Calu3 (cell line): ENCODE measurements at regions of chrX and their contacts with region 1.

Region 1: DNA sequence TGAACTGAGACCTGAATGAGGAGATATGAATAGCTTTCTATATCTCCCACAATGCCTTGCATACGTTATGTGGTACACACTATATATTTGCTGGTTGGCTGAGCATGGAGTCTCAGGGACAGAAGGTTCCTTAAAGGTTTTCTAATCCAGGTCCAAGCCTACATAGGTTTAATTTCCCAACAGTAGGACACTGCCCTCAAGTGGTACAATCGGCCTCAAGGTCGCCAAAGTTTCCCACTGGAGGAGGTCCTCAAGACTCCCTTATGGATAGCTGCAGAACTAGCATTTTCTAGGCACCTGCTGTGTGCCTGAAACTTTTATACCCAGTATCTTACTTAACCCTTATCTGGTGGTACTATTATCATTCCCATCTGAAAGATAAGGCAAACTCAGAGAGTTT is 21.0 kb upstream of the EFNB1 start:
- DNase-seq: no peak
- H3K4me3 Mint-ChIP-seq: no peak overlapping the region
- H3K27ac Mint-ChIP-seq: no peak overlapping the region
- H3K4me1 Mint-ChIP-seq: no peaks in the 10 kb centered on the region
- H3K27me3 Mint-ChIP-seq: peaks cover 21% of the 10 kb centered on the region
- CTCF ChIP-seq: peak; percentile 16

Region 2: DNA sequence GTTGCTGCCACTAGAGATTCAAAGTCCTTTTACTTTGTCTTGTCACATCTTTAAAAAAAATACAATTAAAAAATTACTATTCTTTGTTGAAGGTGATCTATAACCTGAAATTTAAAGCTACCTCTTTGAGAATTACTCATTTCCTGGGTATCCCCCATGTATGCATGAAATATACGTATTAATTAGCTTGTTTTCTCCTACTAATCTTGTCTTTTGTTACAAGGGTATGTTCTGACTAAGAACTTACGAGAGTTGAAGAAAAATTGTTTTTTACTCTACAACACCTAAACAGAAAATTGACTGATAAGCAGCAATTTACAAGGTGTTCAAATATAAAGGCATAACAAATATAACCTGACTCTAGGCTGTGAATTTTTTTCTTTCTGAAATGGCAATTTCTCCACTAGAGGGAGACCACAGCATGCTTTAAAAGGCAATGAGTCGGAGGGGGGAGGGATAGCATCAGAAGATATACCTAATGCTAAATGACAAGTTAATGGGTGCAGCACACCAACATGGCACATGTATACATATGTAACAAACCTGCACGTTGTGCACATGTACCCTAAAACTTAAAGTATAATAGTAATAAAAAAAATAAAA is 624.1 kb before region 1 on chrX:
- CTCF ChIA-PET with region 1: no interaction called
- intact Hi-C with region 1: loop called (anchors 5 kb)
- DNase-seq: peak; percentile 20
- H3K4me3 Mint-ChIP-seq: no peak overlapping the region
- H3K27ac Mint-ChIP-seq: no peak overlapping the region
- H3K4me1 Mint-ChIP-seq: peaks cover 25% of the 10 kb centered on the region
- H3K27me3 Mint-ChIP-seq: no peaks in the 10 kb centered on the region
- CTCF ChIP-seq: peak; percentile 55

Region 3: DNA sequence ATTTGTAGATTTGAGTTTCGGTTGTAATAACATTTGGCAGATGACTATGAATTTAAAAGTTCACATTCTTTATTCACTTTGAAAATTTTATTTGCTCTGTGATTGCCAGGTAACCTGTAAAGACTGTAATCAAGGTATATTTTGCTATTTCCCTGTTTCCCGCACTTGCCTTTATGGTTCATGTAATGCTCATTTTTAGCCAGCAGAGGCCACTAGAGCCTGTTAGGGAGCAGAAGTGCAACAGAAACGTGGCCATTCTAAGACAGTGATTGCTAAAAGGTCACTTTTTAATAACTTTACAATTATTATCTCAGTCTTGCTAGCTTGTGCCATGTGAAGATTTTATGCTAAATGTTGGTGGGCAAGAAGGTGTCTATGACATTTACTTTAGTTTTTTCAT is 296.6 kb before region 1 on chrX:
- CTCF ChIA-PET with region 1: no interaction called
- intact Hi-C with region 1: loop called (anchors 5 kb)
- DNase-seq: peak; percentile 48
- H3K4me3 Mint-ChIP-seq: no peak overlapping the region
- H3K27ac Mint-ChIP-seq: no peak overlapping the region
- H3K4me1 Mint-ChIP-seq: peaks cover 17% of the 10 kb centered on the region
- H3K27me3 Mint-ChIP-seq: no peaks in the 10 kb centered on the region
- CTCF ChIP-seq: no peak

Region 4: GRCh38 chrX:68732906-68733493 is 74.8 kb before region 1 on chrX:
- CTCF ChIA-PET with region 1: interaction called, 12 read pairs
- intact Hi-C with region 1: loop called (anchors 2 kb)
- DNase-seq: peak; percentile 78
- H3K4me3 Mint-ChIP-seq: no peak overlapping the region
- H3K27ac Mint-ChIP-seq: no peak overlapping the region
- H3K4me1 Mint-ChIP-seq: no peaks in the 10 kb centered on the region
- H3K27me3 Mint-ChIP-seq: peaks cover 66% of the 10 kb centered on the region
- CTCF ChIP-seq: peak; percentile 59

Region 5: GRCh38 chrX:68842781-68843581 is 35.2 kb after region 1 on chrX:
- CTCF ChIA-PET with region 1: no interaction called
- intact Hi-C with region 1: no loop called
- DNase-seq: no peak
- H3K4me3 Mint-ChIP-seq: no peak overlapping the region
- H3K27ac Mint-ChIP-seq: peak overlapping the region; percentile 1
- H3K4me1 Mint-ChIP-seq: peaks cover 19% of the 10 kb centered on the region
- H3K27me3 Mint-ChIP-seq: no peaks in the 10 kb centered on the region
- CTCF ChIP-seq: no peak